ENCODE measurements at regions of chr17 and their contacts with region 1.

Region 1: GRCh38 chr17:17919169-17920107 is 52.8 kb downstream of the TOM1L2 start:
- DNase-seq: peak; percentile 72
- ATAC-seq: peak; percentile 61

Region 2: DNA sequence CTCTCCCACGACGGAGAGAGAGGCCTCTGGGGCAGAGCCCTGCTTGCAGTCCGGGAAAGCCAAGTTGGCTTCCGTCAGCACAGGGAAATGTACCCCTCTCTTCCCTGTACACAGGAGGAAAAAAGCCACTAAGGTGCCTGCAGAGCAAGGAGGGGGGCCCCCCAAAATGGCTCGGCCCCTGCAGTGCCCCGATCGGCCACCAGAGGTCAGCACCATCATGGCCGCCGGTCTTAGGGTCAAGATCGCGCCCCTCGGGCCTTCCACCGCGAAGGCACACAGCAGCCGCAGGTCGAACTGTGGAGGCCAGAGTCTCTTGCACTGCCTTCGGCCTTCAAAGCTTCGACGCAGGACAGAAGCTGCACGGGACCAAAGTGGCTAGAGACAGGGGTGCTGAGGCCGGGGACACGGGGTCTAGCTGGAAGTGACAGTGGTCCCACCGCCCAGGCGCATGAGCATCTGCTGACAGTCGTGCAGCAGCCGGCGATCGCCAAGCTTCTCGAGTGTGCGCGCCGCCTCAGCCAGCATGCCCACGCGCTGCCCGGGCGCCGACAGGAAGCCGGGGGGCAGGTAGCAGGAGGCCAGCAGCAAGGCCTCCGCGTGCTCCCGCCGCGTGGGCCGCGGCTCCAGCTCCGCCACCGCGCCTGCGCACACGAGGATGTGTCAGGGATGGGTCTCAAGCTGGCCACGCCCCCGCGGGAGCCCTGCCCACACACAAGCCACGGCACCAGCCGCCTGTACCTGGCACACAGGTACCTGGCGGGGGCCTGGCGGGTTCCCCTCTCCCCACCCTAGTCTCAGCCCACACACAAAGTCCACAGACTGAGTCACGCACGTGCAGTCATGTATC is 107.0 kb before region 1 on chr17:
- intact Hi-C with region 1: loop called (anchors 2 kb)
- DNase-seq: peak; percentile 88
- ATAC-seq: peak; percentile 51

Region 3: DNA sequence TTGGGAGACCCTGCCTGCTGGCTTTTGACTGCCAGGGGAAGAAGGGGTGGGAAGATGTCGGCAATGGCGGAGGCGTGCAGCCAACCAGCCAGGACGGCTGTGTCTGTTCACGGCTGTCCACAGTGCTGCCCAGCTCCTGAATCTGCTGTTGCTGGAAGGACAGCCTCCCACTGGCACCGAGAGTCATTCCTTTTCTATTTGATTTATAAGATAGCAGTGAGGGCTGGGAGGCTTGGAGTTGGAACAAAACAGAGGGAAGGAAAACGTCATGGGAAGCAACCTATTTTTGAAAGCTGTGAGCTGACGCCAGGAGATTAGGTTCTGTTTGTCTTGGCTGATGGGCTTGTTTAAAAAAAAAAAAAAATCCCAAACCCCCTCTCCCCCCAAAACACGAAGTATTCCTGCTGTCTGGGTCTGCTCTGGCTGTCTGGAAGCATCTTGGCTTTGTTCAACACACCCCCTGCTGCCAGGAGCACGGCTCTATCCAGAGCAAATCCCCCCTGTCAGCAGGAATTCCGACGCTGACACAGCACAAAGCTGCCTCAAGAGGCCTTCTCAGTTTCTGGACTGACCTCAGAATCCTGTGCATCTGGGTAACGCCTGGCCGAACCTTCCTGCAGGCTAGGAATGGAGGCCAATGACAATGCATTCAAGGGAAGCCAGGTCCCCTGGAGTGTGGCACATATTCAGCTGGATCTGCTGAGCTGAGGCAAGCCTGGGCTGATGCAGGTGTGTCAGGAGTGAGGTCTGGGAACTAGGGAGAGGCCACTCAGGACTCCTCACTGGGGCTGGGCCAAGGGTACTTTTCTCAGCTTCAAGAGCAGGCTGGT is 41.7 kb before region 1 on chr17:
- intact Hi-C with region 1: loop called (anchors 1 kb)
- DNase-seq: peak; percentile 87
- ATAC-seq: peak; percentile 85

Region 4: DNA sequence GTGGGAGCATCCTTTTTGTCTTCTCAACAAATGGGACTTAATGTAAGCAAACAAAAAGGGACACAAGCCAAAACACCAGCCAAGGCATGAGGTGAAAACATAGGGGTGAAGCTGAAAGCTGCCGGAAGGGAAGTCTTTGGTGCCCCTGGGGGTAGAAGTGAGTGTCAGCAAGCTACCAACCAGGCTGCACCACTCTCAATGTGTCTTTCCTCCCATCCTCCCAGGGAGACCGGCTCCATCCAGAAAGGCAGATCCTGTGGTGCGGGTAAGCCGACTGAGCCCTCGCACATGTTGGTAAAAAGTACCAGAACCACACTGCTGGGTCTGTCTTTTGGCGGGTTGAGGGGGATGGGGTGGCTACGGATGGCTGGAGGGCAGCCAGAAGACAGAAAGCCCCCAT is 30.6 kb before region 1 on chr17:
- intact Hi-C with region 1: loop called (anchors 2 kb)
- DNase-seq: no peak
- ATAC-seq: no peak

Region 5: GRCh38 chr17:17972126-17972951 is 52.9 kb after region 1 on chr17 and contains the starts of genes DRC3 and TOM1L2:
- intact Hi-C with region 1: loop called (anchors 2 kb)
- DNase-seq: peak; percentile 100
- ATAC-seq: peak; percentile 98
- total RNA-seq, gene DRC3: 1.6 TPM
- total RNA-seq, gene TOM1L2: 246 TPM

Region 6: DNA sequence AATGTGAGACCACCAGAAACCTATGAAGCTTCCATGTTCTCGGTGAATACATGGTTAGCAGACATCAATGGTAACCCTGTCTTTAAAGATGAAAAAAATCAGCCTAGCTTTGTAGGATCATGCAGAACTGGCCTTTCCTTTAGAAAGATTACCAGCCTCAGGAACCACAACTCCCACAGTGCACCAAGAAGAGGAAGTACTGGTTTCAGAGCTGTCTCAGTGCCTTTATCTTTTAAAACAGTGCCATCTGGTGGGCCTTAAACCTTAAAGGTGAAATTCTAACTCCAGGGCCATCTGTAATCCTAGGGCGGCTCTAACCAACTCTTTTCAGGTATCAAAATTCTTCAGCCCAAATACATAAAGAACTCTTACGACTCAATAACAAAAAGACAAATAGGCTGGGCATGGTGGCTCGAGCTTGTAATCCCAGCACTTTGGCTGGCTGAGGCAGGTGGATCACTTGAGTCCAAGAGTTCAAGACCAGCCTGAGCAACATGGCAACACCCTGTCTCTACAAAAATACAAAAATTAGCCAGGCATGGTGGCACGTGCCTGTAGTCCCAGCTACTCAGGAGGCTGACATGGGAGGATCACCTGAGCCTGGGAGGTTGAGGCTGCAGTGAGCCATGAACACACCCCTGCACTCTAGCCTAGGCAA is 114.1 kb after region 1 on chr17:
- intact Hi-C with region 1: loop called (anchors 5 kb)
- DNase-seq: no peak
- ATAC-seq: peak; percentile 89

Measured in Right ventricle myocardium inferior (tissue), 1 donor.